CD4-positive, alpha-beta memory T cell (primary cell): ENCODE measurements at regions of chr1 and their contacts with region 1.

Region 1: GRCh38 chr1:23867953-23868556 is at the start of gene FUCA1:
- DNase-seq: peak; percentile 94 to 96 (median 96)
- H3K4me3 ChIP-seq: peak within 1 kb of the TSS in 1 of 2 donors; percentile 77
- H3K4me3 Mint-ChIP-seq: peak within 1 kb of the TSS; percentile 82 to 92 (median 88)
- H3K27ac ChIP-seq: peak within 1 kb of the TSS; percentile 63
- H3K27ac Mint-ChIP-seq: peak within 1 kb of the TSS; percentile 68 to 95 (median 90)
- H3K4me1 ChIP-seq: peaks cover 24% of the 10 kb centered on the region
- H3K4me1 Mint-ChIP-seq: peaks cover 15 to 24% (median 19%) of the 10 kb centered on the region in 4 donors
- H3K27me3 ChIP-seq: no peaks in the 10 kb centered on the region
- H3K27me3 Mint-ChIP-seq: no peaks in the 10 kb centered on the region
- total RNA-seq, gene FUCA1: 32.7 to 35.0 TPM

Region 2: DNA sequence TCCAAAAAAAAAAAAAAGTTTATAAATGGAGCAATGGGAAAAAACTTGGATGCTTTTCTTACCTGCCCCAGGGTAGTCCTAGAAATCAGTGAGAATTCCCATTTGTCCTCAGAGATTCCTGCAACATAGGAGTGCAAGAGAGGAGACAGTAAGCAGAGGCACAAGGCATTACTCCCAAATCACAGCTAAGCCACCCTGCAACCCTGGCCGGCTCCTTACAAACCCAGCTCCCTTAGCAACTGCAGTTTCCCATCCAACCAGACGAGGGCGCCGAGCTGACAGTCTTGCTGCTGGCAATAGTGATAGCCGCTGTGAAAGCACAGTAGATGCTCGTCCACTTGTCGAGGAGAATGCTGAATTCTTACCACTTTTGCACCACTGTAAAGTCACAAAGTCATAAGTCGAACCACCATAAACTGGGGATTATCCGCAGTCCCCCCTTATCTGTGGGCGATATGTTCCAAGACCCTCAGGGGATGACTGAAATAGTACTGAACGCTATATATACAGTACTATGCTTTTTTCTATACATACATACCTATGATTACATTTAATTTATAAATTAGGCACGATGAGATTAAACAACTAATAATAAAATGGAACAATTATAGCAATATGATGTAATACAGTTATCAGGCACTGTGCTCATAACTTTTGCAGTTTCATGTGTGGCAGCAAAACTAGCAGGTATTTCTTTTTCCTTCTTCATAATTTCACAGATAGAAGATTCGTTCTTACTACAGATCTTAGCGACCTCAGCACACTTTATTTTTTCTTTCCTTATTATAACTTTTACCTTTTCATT is 95.8 kb before region 1 on chr1:
- CTCF ChIA-PET with region 1: interaction called, 31 read pairs
- POLR2A ChIA-PET with region 1: no interaction called
- intact Hi-C with region 1: loop called (anchors 1 kb)
- DNase-seq: peak; percentile 72 to 85 (median 77)
- H3K4me3 ChIP-seq: no peak overlapping the region
- H3K4me3 Mint-ChIP-seq: peak overlapping the region in 3 of 8 donors; percentile 24 to 60 (median 55)
- H3K27ac ChIP-seq: no peak overlapping the region
- H3K27ac Mint-ChIP-seq: peak overlapping the region in 1 of 7 donors; percentile 31
- H3K4me1 ChIP-seq: peaks cover 6% of the 10 kb centered on the region
- H3K4me1 Mint-ChIP-seq: peaks cover 3 to 10% (median 5%) of the 10 kb centered on the region in 4 donors
- H3K27me3 ChIP-seq: no peaks in the 10 kb centered on the region
- H3K27me3 Mint-ChIP-seq: no peaks in the 10 kb centered on the region

Region 3: GRCh38 chr1:23809751-23810171 is 58.3 kb before region 1 on chr1:
- CTCF ChIA-PET with region 1: interaction called, 36 read pairs
- POLR2A ChIA-PET with region 1: interaction called, 4 read pairs
- intact Hi-C with region 1: loop called (anchors 1 kb)
- DNase-seq: peak; percentile 79 to 84 (median 81)
- H3K4me3 ChIP-seq: no peak overlapping the region
- H3K4me3 Mint-ChIP-seq: no peak overlapping the region
- H3K27ac ChIP-seq: no peak overlapping the region
- H3K27ac Mint-ChIP-seq: peak overlapping the region in 5 of 7 donors; percentile 12 to 80 (median 43)
- H3K4me1 ChIP-seq: peaks cover 9% of the 10 kb centered on the region
- H3K4me1 Mint-ChIP-seq: peaks cover 7 to 20% (median 15%) of the 10 kb centered on the region in 4 donors
- H3K27me3 ChIP-seq: no peaks in the 10 kb centered on the region
- H3K27me3 Mint-ChIP-seq: no peaks in the 10 kb centered on the region

Region 4: GRCh38 chr1:23838401-23838866 is 29.6 kb before region 1 on chr1:
- CTCF ChIA-PET with region 1: interaction called, 3 read pairs
- POLR2A ChIA-PET with region 1: interaction called, 4 read pairs
- intact Hi-C with region 1: loop called (anchors 1 kb)
- DNase-seq: peak; percentile 67 to 82 (median 73)
- H3K4me3 ChIP-seq: peak overlapping the region in 1 of 2 donors; percentile 49
- H3K4me3 Mint-ChIP-seq: peak overlapping the region; percentile 58 to 88 (median 80)
- H3K27ac ChIP-seq: no peak overlapping the region
- H3K27ac Mint-ChIP-seq: peak overlapping the region in 4 of 7 donors; percentile 26 to 65 (median 47)
- H3K4me1 ChIP-seq: peaks cover 8% of the 10 kb centered on the region
- H3K4me1 Mint-ChIP-seq: peaks cover 5 to 14% (median 11%) of the 10 kb centered on the region in 4 donors
- H3K27me3 ChIP-seq: no peaks in the 10 kb centered on the region
- H3K27me3 Mint-ChIP-seq: peaks cover 5 to 12% of the 10 kb centered on the region in 2 donors